PC-9 (cell line): ENCODE measurements at regions of chr12 and their contacts with region 1.

Region 1: DNA sequence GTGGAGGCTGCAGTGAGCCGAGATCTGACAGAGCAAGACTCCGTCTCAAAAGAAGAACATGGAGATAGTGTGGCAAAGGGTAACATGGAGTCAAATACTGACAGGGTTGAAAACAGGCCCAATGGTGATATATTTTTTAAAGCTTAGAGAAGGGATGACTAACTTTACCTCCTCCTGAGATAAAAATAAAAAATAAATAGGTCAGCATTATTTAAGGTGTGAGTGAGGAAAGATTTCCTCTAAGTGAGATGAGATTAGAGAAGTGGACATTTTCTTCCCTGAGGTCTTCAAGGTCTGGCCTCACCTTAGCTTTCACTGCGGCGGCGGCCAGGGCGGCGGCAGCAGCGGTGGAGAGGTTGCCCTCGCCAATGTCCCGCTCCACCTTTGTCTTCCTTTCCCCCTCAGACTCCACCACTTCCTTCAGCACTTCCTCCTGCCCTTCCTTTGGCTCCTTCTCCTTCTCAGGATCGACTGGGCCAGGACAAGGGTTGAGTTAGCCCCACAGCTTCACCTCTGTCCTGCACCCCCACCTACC is 11.1 kb downstream of the MYL6 start:
- DNase-seq: no peak
- H3K4me3 ChIP-seq: no peak overlapping the region
- H3K27ac ChIP-seq: no peak overlapping the region
- H3K4me1 ChIP-seq: no peaks in the 10 kb centered on the region
- H3K27me3 ChIP-seq: no peaks in the 10 kb centered on the region
- CTCF ChIP-seq: no peak

Region 2: GRCh38 chr12:56152318-56153033 is 16.8 kb before region 1 on chr12 and contains the start of gene MYL6B:
- CTCF ChIA-PET with region 1: interaction called, 11 read pairs
- POLR2A ChIA-PET with region 1: interaction called, 3 read pairs
- intact Hi-C with region 1: no loop called
- DNase-seq: peak; percentile 80 to 89
- H3K4me3 ChIP-seq: peak within 1 kb of the TSS; percentile 77
- H3K27ac ChIP-seq: peak within 1 kb of the TSS; percentile 83
- H3K4me1 ChIP-seq: peaks cover 29% of the 10 kb centered on the region
- H3K27me3 ChIP-seq: no peaks in the 10 kb centered on the region
- CTCF ChIP-seq: no peak
- total RNA-seq, gene MYL6B: 120 and 121 TPM in 2 replicates

Region 3: DNA sequence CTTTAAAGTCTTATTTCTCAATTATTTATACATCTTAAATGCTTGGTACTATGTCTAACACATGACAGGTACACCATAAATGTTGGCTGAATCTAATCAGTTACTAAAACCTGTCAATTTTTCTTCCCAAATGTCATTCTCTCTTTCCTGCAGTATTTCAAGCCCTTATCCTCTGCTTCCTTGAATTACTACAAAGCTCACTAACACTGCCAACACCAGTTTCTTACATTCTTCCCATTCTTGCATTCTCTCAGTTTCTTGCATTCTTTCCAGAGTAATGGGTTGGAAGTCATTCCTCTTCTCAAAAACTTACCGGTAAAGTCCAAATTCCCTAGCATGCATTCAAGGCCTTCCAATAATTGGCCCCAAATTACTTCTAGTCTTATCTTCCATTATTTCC is 29.5 kb after region 1 on chr12:
- CTCF ChIA-PET with region 1: no interaction called
- POLR2A ChIA-PET with region 1: interaction called, 14 read pairs
- intact Hi-C with region 1: no loop called
- DNase-seq: no peak
- H3K4me3 ChIP-seq: no peak overlapping the region
- H3K27ac ChIP-seq: no peak overlapping the region
- H3K4me1 ChIP-seq: no peaks in the 10 kb centered on the region
- H3K27me3 ChIP-seq: no peaks in the 10 kb centered on the region
- CTCF ChIP-seq: no peak